ENCODE measurements at regions of chr7 and their contacts with region 1.

Region 1: GRCh38 chr7:94395141-94396036 is 694 bp downstream of the COL1A2 start:
- DNase-seq: peak; percentile 33
- H3K4me3 ChIP-seq: peak overlapping the region; percentile 23 to 29
- H3K27ac ChIP-seq: peak overlapping the region; percentile 63 to 77
- H3K4me1 ChIP-seq: no peaks in the 10 kb centered on the region
- H3K27me3 ChIP-seq: no peaks in the 10 kb centered on the region
- CTCF ChIP-seq: peak; percentile 26 to 81 (median 56)
- POLR2A ChIP-seq: no peak

Region 2: GRCh38 chr7:94374231-94374630 is 21.2 kb before region 1 on chr7:
- intact Hi-C with region 1: loop called (anchors 2 kb)
- DNase-seq: no peak
- H3K4me3 ChIP-seq: no peak overlapping the region
- H3K27ac ChIP-seq: peak overlapping the region; percentile 50 to 65
- H3K4me1 ChIP-seq: no peaks in the 10 kb centered on the region
- H3K27me3 ChIP-seq: no peaks in the 10 kb centered on the region
- CTCF ChIP-seq: no peak
- POLR2A ChIP-seq: no peak

Region 3: DNA sequence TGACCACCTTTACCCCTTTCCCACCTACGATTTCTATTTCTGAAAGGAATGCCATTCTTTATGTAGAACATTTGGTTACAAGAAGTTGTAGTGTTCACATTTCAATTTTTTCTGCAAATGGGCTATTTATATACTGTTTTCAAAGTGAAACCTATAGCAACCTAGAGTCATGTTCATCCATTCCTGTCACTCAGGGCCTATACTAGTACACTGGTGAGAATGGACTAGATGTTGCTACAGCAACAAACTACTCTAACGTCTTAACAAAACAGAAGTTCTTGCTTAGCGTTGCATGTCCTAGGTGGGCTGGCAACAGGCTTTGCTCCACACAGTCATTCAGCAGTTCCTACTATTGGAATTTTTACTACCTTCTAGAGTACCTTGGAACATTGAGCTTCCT is 130.5 kb after region 1 on chr7:
- intact Hi-C with region 1: no loop called
- DNase-seq: no peak
- H3K4me3 ChIP-seq: no peak overlapping the region
- H3K27ac ChIP-seq: no peak overlapping the region
- H3K4me1 ChIP-seq: no peaks in the 10 kb centered on the region
- H3K27me3 ChIP-seq: no peaks in the 10 kb centered on the region
- CTCF ChIP-seq: no peak
- POLR2A ChIP-seq: no peak